H1 (cell line): ENCODE measurements at regions of chr17 and their contacts with region 1.

Region 1: GRCh38 chr17:74305865-74306654 is 20.0 kb upstream of the KIF19 start:
- DNase-seq: no peak
- H3K4me3 ChIP-seq: no peak overlapping the region
- H3K27ac ChIP-seq: no peak overlapping the region
- H3K4me1 ChIP-seq: no peaks in the 10 kb centered on the region
- H3K27me3 ChIP-seq: no peaks in the 10 kb centered on the region
- CTCF ChIP-seq: peak in 2 of 3 experiments; percentile 43 to 57; a peak in 3 of 4 replicates
- EP300 ChIP-seq: no peak
- POLR2A ChIP-seq: no peak
- RAD21 ChIP-seq: peak; percentile 62 to 74

Region 2: DNA sequence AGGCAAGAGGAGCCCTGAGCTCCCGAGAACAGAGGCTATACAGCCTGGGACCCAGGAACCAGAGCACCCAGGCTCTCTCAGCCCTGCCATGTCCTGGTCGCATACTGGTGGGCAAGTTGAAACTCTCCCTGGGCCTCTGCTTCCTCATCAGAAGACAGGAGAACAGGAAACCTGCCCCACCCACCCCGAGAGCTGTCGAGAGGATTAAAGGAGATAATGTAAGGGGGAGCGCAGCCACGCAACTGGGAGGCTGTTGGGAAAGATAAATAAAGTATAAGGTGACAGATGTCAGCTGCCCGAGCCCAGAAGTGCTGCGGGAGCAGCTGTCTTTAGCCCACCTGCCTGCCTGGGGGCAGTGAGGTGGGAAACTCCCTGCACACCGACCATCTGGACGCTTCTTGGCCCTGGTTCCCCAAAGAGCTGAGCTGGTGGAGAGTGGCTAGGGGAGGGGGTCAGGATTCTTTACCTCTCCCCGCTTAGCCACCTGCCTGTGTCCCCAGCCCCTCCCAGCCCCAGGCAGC is 26.8 kb after region 1 on chr17:
- CTCF ChIA-PET with region 1: interaction called, 12 read pairs
- POLR2A ChIA-PET with region 1: no interaction called
- DNase-seq: no peak
- H3K4me3 ChIP-seq: no peak overlapping the region
- H3K27ac ChIP-seq: no peak overlapping the region
- H3K4me1 ChIP-seq: peaks cover 3 to 13% (median 3%) of the 10 kb centered on the region in 4 experiments; a peak in 5 of 7 replicates
- H3K27me3 ChIP-seq: peaks cover 0 to 4% (median 3%) of the 10 kb centered on the region in 4 experiments; a peak in 3 of 7 replicates
- CTCF ChIP-seq: no peak
- EP300 ChIP-seq: no peak
- POLR2A ChIP-seq: no peak
- RAD21 ChIP-seq: no peak